ENCODE measurements at regions of chr17 and their contacts with region 1.

Region 1: DNA sequence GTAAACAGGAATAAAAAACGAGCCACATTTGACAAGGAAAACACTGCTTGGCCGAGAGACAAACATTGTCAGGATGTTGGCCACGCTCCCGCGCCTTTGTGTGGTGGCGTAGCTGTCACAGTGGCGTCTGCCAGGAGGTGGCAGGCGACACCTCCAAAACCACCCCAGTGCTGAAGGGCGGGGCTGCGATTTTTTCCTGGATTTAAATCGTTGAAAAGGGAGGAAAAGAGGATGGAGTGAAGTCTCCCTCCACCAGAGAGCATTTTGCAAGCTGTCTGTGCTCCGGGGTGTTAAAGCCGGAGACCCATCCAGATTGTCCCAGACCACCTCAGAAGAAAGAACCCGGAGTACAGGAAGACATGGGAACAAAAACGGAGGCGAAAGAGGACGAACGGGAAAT is 12.7 kb downstream of the MRM3 start:
- DNase-seq: peak; percentile 85 to 93
- ATAC-seq: peak; percentile 77 to 86 (median 82)
- H3K4me3 ChIP-seq: peak overlapping the region; percentile 61
- H3K27ac ChIP-seq: peak overlapping the region; percentile 30
- H3K4me1 ChIP-seq: peaks cover 28% of the 10 kb centered on the region
- H3K27me3 ChIP-seq: no peaks in the 10 kb centered on the region
- CTCF ChIP-seq: peak; percentile 88

Region 2: GRCh38 chr17:846901-847843 is 52.3 kb after region 1 on chr17:
- intact Hi-C with region 1: loop called (anchors 5 kb)
- DNase-seq: no peak
- ATAC-seq: no peak
- H3K4me3 ChIP-seq: peak overlapping the region; percentile 5
- H3K27ac ChIP-seq: no peak overlapping the region
- H3K4me1 ChIP-seq: peaks cover 58% of the 10 kb centered on the region
- H3K27me3 ChIP-seq: no peaks in the 10 kb centered on the region
- CTCF ChIP-seq: no peak

Region 3: GRCh38 chr17:879549-880442 is 84.9 kb after region 1 on chr17:
- intact Hi-C with region 1: loop called (anchors 5 to 10 kb)
- DNase-seq: peak; percentile 78 to 86
- ATAC-seq: peak; percentile 28 to 67 (median 53)
- H3K4me3 ChIP-seq: no peak overlapping the region
- H3K27ac ChIP-seq: peak overlapping the region; percentile 79
- H3K4me1 ChIP-seq: peaks cover 46% of the 10 kb centered on the region
- H3K27me3 ChIP-seq: no peaks in the 10 kb centered on the region
- CTCF ChIP-seq: peak; percentile 67

Region 4: GRCh38 chr17:979538-980405 is 184.9 kb after region 1 on chr17 and contains the start of gene NXN:
- intact Hi-C with region 1: loop called (anchors 1 to 2 kb)
- DNase-seq: peak; percentile 87 to 95
- ATAC-seq: peak; percentile 83 to 95 (median 92)
- H3K4me3 ChIP-seq: peak within 1 kb of the TSS; percentile 87
- H3K27ac ChIP-seq: peak within 1 kb of the TSS; percentile 86
- H3K4me1 ChIP-seq: peaks cover 41% of the 10 kb centered on the region
- H3K27me3 ChIP-seq: no peaks in the 10 kb centered on the region
- CTCF ChIP-seq: peak; percentile 33
- total RNA-seq, gene NXN: 72.8 to 79.4 (median 74.1) TPM

Region 5: GRCh38 chr17:1055751-1056645 is 261.1 kb after region 1 on chr17:
- intact Hi-C with region 1: loop called in 1 of 2 experiments (anchors 5 kb)
- DNase-seq: peak; percentile 65 to 83
- ATAC-seq: peak; percentile 67 to 88 (median 80)
- H3K4me3 ChIP-seq: no peak overlapping the region
- H3K27ac ChIP-seq: peak overlapping the region; percentile 41
- H3K4me1 ChIP-seq: peaks cover 5% of the 10 kb centered on the region
- H3K27me3 ChIP-seq: no peaks in the 10 kb centered on the region
- CTCF ChIP-seq: peak; percentile 82

Measured in psoas muscle (tissue), 8 donors.